Activated CD4-positive, alpha-beta T cell treated with anti-CD3 and anti-CD28 coated beads for 36 hours (primary cell): ENCODE measurements at regions of chr1 and their contacts with region 1.

Region 1: GRCh38 chr1:225474986-225475820 is 47.4 kb upstream of the LBR start:
- DNase-seq: peak; percentile 80
- ATAC-seq: peak; percentile 70
- H3K4me3 Mint-ChIP-seq: no peak overlapping the region
- H3K27ac Mint-ChIP-seq: no peak overlapping the region
- H3K4me1 Mint-ChIP-seq: peaks cover 41% of the 10 kb centered on the region
- H3K27me3 Mint-ChIP-seq: no peaks in the 10 kb centered on the region

Region 2: GRCh38 chr1:225299624-225300023 is 175.6 kb before region 1 on chr1:
- CTCF ChIA-PET with region 1: no interaction called
- POLR2A ChIA-PET with region 1: no interaction called
- intact Hi-C with region 1: no loop called
- DNase-seq: no peak
- ATAC-seq: no peak
- H3K4me3 Mint-ChIP-seq: no peak overlapping the region
- H3K27ac Mint-ChIP-seq: no peak overlapping the region
- H3K4me1 Mint-ChIP-seq: no peaks in the 10 kb centered on the region
- H3K27me3 Mint-ChIP-seq: peaks cover 3% of the 10 kb centered on the region

Region 3: DNA sequence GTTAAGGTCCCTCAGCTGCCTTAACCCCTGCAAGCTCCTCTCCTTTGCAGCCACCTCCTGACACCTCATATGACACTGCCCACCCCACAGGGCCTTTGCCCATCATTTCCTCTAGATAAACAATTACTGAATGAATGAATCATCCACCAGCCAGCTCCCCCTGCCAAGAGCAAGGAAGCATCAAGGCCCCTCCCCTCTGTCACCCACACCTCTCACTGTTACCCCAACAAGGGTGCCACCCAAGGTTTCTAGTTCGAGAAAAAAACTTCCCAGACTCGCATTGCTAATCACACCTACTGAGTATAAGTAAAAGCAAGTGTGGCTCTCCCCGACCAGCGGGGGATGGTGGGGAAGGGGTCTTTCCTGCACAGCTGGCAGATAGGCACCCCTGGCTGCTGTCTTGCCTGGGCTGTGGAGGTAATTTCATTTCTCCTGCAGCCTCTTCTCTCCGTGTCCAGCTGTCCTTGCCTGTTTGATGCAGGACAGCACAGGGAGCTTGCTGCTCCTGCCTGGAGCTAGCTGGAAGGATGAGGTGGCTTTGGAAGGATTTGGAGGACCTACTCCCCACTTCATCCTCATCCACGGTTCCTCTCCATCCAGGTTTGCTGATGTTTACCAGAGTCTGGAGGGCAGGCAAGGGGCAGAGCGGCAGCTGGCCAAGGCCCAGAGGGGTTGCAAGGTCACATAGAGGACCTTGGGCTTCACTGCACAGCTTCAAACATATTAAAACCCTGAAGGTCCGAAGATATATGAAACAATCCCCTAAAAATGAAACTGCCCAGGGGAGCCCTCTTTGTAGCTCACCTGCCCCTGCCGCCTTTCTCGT is 14.3 kb before region 1 on chr1:
- CTCF ChIA-PET with region 1: interaction called, 14 read pairs
- POLR2A ChIA-PET with region 1: no interaction called
- intact Hi-C with region 1: no loop called
- DNase-seq: peak; percentile 75
- ATAC-seq: peak; percentile 95
- H3K4me3 Mint-ChIP-seq: no peak overlapping the region
- H3K27ac Mint-ChIP-seq: peak overlapping the region; percentile 78
- H3K4me1 Mint-ChIP-seq: peaks cover 32% of the 10 kb centered on the region
- H3K27me3 Mint-ChIP-seq: no peaks in the 10 kb centered on the region

Region 4: DNA sequence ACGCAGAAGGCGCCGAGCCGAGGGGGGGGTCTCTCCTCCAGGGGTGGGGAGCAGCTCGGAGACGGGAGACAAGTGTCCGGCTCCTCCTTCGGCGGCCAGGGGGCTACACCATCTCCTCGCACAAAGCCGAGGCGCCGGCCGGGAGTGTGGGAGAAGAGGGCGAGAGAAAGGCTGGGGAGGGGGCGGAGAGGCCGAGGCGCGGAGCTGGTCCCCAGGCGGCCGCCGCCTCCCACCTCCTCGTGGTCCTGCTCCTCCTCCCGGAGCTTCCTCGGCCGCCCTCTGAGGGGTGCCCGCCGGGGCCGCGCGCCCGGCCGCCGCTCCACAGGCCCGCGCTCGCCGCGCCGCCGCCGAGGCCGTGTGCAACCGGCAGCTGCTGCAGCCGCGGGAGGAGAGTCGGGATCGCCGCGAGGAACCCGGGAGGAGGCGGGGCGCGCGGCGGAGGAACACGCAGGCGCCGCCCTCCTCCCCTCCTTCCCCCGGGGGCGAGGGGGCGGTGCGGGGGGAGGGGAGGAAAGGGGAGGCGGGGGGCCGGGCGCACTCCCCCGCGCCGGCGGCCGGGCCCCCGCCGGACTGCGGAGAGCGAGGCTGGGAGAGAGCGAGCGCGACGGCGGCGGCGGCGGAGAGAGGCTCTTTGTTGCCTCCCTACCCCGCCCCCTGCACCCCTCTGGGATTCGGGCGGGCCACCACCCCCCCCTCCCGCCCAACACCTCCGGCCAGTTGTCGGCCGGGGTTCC is 177.7 kb after region 1 on chr1 and contains the start of gene ENAH:
- CTCF ChIA-PET with region 1: no interaction called
- POLR2A ChIA-PET with region 1: interaction called, 3 read pairs
- intact Hi-C with region 1: loop called (anchors 2 to 10 kb)
- DNase-seq: peak; percentile 65
- ATAC-seq: peak; percentile 69
- H3K4me3 Mint-ChIP-seq: peak within 1 kb of the TSS; percentile 75
- H3K27ac Mint-ChIP-seq: peak within 1 kb of the TSS; percentile 15
- H3K4me1 Mint-ChIP-seq: peaks cover 12% of the 10 kb centered on the region
- H3K27me3 Mint-ChIP-seq: peaks cover 31% of the 10 kb centered on the region
- total RNA-seq, gene ENAH: 0.62 to 0.81 TPM

Region 5: GRCh38 chr1:225845571-225846259 is 370.5 kb after region 1 on chr1:
- CTCF ChIA-PET with region 1: no interaction called
- POLR2A ChIA-PET with region 1: no interaction called
- intact Hi-C with region 1: loop called (anchors 2 to 10 kb)
- DNase-seq: peak; percentile 64
- ATAC-seq: peak; percentile 43
- H3K4me3 Mint-ChIP-seq: no peak overlapping the region
- H3K27ac Mint-ChIP-seq: no peak overlapping the region
- H3K4me1 Mint-ChIP-seq: peaks cover 34% of the 10 kb centered on the region
- H3K27me3 Mint-ChIP-seq: no peaks in the 10 kb centered on the region

Region 6: DNA sequence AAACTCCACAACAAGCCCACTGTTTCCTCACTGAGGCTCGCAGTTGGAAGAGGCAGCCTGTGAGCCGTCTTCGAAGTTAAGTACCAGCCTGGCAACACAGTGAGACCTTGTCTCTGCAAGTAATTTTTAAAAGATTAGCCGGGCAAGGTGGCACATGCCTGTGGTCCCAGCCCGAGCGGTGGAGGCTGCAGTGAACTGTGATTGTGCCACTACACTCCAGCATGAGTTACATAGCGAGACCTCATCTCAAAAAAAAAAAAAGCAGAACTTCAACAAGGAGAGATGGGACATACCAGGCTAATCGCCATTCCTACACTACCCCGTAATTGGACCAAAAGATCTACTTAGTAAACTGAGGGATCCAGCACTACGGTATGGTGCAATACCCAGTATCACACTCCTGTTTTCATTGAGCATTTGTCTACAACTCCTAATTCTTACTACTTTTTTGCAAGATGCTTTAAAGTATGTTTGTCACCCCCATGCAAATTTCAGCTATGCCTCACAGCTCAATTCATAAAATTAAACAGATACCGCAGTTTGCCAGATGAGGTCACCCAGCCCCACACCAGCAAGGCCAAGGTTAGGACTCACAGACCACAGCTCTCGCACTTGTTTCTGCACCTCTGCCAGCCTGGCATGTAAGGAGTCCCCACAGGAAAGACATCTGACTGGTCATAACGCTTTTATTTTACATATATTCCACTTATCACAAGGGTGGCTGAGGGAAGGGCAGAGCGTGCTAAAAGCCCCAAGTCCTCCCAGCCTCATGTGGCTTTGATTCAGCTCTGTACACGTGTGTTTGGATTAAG is 502.9 kb after region 1 on chr1:
- CTCF ChIA-PET with region 1: interaction called, 5 read pairs
- POLR2A ChIA-PET with region 1: interaction called, 3 read pairs
- intact Hi-C with region 1: loop called (anchors 1 kb)
- DNase-seq: no peak
- ATAC-seq: no peak
- H3K4me3 Mint-ChIP-seq: no peak overlapping the region
- H3K27ac Mint-ChIP-seq: no peak overlapping the region
- H3K4me1 Mint-ChIP-seq: peaks cover 6% of the 10 kb centered on the region
- H3K27me3 Mint-ChIP-seq: no peaks in the 10 kb centered on the region

Region 7: GRCh38 chr1:226195144-226195543 is 719.9 kb after region 1 on chr1:
- CTCF ChIA-PET with region 1: no interaction called
- POLR2A ChIA-PET with region 1: no interaction called
- intact Hi-C with region 1: loop called in 1 of 2 experiments (anchors 10 kb)
- DNase-seq: no peak
- ATAC-seq: no peak
- H3K4me3 Mint-ChIP-seq: no peak overlapping the region
- H3K27ac Mint-ChIP-seq: no peak overlapping the region
- H3K4me1 Mint-ChIP-seq: no peaks in the 10 kb centered on the region
- H3K27me3 Mint-ChIP-seq: no peaks in the 10 kb centered on the region